CD8-positive, alpha-beta T cell (primary cell): ENCODE measurements at regions of chr12 and their contacts with region 1.

Region 1: DNA sequence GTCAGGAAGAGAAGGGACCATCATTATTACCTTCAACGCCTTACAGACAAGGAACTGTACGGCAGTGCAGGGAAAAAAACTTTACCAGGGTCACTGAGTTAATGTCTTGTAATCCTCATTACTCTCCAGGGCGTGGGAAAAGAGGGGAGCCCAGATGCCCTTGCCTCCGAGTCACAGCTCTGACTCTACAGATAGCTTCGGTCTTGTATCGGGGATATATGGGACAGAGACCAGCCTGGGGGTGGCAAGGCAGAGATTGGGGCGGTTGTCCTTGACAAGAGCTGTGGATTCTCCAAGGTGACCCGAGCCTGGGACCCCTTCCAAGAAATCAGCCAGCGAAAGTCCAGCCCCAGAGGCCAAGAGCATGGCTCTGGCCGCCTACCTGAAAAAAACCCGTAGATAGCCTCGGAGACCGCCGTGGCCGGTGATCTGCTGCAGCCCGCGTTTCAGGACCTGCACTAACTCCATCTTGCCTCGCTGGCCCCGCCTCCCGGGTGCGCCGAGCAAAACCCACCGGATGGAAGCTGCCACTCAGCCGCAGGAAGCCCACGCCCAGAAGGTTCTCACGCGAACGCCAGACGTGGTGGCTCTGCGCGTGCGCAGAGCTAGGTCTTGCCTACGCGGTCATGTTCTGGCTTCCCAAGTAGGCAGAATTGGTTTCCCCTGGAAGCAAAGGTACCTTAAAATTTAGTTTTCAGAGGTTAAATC is at the start of gene NDUFA12:
- DNase-seq: peak; percentile 87 to 98 (median 94)
- ATAC-seq: peak; percentile 99
- H3K4me3 ChIP-seq: peak within 1 kb of the TSS; percentile 74 to 97
- H3K4me3 Mint-ChIP-seq: peak within 1 kb of the TSS; percentile 93
- H3K27ac ChIP-seq: peak within 1 kb of the TSS; percentile 64 to 82
- H3K27ac Mint-ChIP-seq: peak within 1 kb of the TSS; percentile 94
- H3K4me1 ChIP-seq: peaks cover 46% of the 10 kb centered on the region
- H3K4me1 Mint-ChIP-seq: peaks cover 57% of the 10 kb centered on the region
- H3K27me3 ChIP-seq: no peaks in the 10 kb centered on the region
- H3K27me3 Mint-ChIP-seq: no peaks in the 10 kb centered on the region
- CTCF ChIP-seq: no peak
- total RNA-seq, gene NDUFA12: 37.4 to 42.4 TPM

Region 2: DNA sequence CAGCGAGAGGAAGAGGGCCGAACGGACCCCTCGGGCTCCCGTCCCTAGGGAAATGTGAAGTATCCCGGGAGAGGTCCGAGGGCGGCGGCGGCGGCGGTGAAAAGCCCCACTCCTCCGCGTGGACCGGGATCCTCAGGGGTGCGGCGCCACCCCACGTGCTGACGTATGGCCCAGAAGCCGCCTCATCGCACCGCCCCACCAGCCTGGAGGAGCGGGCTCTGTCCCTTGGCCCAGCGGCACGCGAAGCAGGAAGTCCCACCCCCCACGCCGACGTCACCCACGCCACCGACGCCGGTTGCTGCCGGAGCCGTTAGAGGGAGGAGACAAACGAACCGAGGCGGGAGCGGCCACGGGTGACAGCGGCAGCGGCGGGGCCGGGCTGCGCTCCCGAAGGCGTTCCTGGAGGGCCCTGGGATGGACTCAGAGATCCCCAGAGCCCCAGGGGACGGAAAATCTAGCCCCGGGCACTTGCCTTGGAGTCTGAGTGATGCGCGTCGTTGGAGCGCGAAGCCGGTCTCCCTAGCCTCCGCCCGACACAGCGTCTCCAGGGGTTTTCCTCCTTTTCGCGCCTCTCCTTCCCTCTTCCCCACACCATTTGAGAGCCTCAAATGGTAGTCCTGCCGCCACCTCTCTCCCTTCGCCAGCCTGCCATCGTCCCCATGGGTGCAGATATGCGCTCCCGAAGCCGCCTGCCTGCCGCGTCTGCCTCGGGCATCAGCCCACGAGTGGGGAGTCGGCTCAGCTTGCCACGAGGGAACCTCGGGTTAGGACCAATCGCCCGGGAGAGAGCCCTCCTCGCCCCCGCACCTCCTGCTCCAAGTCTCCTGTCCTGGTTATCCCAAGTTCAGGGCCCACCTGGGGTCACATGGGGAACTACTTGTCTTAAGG is 543.4 kb before region 1 on chr12 and contains the start of gene CEP83:
- CTCF ChIA-PET with region 1: no interaction called
- POLR2A ChIA-PET with region 1: no interaction called
- intact Hi-C with region 1: loop called (anchors 2 to 10 kb)
- DNase-seq: peak; percentile 90 to 98 (median 97)
- ATAC-seq: peak; percentile 96
- H3K4me3 ChIP-seq: peak within 1 kb of the TSS; percentile 94 to 96
- H3K4me3 Mint-ChIP-seq: peak within 1 kb of the TSS; percentile 96
- H3K27ac ChIP-seq: peak within 1 kb of the TSS; percentile 91 to 93
- H3K27ac Mint-ChIP-seq: peak within 1 kb of the TSS; percentile 94
- H3K4me1 ChIP-seq: peaks cover 6% of the 10 kb centered on the region
- H3K4me1 Mint-ChIP-seq: peaks cover 33% of the 10 kb centered on the region
- H3K27me3 ChIP-seq: peaks cover 0 to 2% of the 10 kb centered on the region in 2 experiments
- H3K27me3 Mint-ChIP-seq: peaks cover 5% of the 10 kb centered on the region
- CTCF ChIP-seq: no peak
- total RNA-seq, gene CEP83: 9.7 to 11.2 TPM

Region 3: DNA sequence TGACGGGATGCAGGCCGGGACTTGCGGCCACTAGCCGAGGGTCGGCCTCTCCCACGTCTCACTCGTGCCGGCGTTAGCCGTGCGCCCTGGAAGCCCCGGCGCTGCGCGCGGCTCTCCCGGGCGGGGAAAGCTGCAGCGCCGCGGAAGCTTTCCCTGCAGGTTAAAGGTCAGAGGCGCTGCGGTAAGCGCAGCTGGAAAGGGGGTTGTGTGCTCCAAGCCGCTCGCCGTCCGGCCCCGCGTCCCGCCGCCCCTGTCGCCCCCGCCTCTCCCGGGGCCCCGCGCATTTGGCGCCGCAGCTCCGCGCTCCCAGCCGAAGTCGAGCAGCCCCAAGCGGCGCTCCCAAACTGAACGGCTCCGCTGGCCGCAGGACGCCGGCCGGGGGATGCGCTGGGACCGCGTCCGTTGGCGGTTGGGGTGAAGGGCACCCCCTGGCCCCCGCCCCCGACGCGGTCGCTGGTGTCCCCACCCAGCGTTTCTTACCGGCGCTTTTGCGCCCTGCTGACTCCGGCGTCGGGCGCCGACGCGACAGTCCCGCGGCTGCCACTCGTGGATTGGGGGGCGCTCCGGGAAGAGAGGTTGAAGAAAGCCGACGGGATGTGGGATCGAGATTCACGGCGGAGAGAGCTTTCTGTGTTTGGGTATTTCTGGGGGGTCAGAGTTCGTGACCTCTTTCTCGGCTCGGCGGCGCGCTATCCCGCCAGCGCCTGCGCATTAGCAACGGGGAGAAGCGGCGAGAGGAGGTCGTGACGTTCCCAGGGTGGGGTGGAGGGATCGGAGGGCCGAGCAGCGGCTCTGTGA is 69.7 kb after region 1 on chr12 and contains the start of gene NR2C1:
- CTCF ChIA-PET with region 1: interaction called, 8 read pairs
- POLR2A ChIA-PET with region 1: interaction called, 6 read pairs
- intact Hi-C with region 1: loop called (anchors 1 to 2 kb)
- DNase-seq: peak; percentile 83 to 97 (median 91)
- ATAC-seq: peak; percentile 98
- H3K4me3 ChIP-seq: peak within 1 kb of the TSS; percentile 86 to 96
- H3K4me3 Mint-ChIP-seq: peak within 1 kb of the TSS; percentile 97
- H3K27ac ChIP-seq: peak within 1 kb of the TSS; percentile 71 to 74
- H3K27ac Mint-ChIP-seq: peak within 1 kb of the TSS; percentile 95
- H3K4me1 ChIP-seq: peaks cover 5% of the 10 kb centered on the region
- H3K4me1 Mint-ChIP-seq: peaks cover 26% of the 10 kb centered on the region
- H3K27me3 ChIP-seq: no peaks in the 10 kb centered on the region
- H3K27me3 Mint-ChIP-seq: no peaks in the 10 kb centered on the region
- CTCF ChIP-seq: no peak
- total RNA-seq, gene NR2C1: 40.7 to 49.2 TPM

Region 4: DNA sequence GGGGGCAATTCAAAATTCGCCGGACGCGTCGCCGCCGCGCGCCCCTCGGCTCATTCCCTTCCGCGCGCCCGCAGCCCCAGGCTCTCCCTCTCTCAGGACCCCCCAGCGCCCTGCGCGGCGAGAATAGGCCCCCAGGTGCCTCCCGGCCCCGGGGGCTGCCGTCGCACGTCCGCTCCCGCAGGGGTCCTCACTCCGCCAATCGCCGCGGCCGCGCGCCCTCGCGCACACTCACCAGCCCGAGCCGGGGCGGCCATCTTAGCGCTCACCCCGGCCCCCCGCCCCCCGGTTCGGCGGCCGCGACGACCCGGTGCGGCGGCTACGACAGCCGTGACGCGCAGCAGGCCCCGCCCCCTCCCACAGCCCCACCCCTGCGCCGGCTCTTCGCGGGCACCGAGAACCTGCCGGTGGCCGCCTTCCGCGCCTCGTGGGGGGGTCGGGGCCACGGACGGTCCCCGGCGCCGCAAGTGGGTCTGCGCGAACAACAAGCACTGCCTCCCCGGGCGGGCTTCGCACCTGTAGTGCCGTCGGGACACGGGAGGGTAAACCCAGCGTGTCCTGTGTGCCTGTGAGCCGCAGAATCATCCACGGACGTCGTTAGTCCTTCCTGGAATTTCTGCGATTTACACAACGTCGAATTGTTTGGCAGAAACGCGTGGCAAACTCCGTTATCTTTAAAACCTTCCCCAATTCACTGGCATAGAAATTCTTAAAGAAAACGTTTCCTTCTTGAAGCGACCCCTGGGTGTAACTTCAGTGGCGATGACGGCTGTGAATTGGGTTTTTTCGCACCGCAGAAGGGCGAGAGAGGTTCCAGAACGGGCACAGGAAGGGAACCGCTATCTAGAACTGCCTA is 545.4 kb after region 1 on chr12:
- CTCF ChIA-PET with region 1: no interaction called
- POLR2A ChIA-PET with region 1: no interaction called
- intact Hi-C with region 1: loop called in 1 of 2 experiments (anchors 5 kb)
- DNase-seq: peak; percentile 47 to 88 (median 71)
- ATAC-seq: peak; percentile 73
- H3K4me3 ChIP-seq: peak overlapping the region; percentile 65 to 81
- H3K4me3 Mint-ChIP-seq: peak overlapping the region; percentile 95
- H3K27ac ChIP-seq: peak overlapping the region; percentile 77 to 86
- H3K27ac Mint-ChIP-seq: peak overlapping the region; percentile 96
- H3K4me1 ChIP-seq: peaks cover 25% of the 10 kb centered on the region
- H3K4me1 Mint-ChIP-seq: peaks cover 57% of the 10 kb centered on the region
- H3K27me3 ChIP-seq: peaks cover 0 to 2% of the 10 kb centered on the region in 2 experiments
- H3K27me3 Mint-ChIP-seq: no peaks in the 10 kb centered on the region
- CTCF ChIP-seq: no peak

Region 5: GRCh38 chr12:96035278-96036236 is 1032.2 kb after region 1 on chr12 and contains the start of gene LTA4H:
- CTCF ChIA-PET with region 1: no interaction called
- POLR2A ChIA-PET with region 1: no interaction called
- intact Hi-C with region 1: loop called in 1 of 2 experiments (anchors 5 kb)
- DNase-seq: peak; percentile 90 to 99 (median 97)
- ATAC-seq: peak; percentile 92
- H3K4me3 ChIP-seq: peak within 1 kb of the TSS; percentile 65 to 92
- H3K4me3 Mint-ChIP-seq: no peak within 1 kb of the TSS
- H3K27ac ChIP-seq: peak within 1 kb of the TSS; percentile 68 to 78
- H3K27ac Mint-ChIP-seq: no peak within 1 kb of the TSS
- H3K4me1 ChIP-seq: peaks cover 14% of the 10 kb centered on the region
- H3K4me1 Mint-ChIP-seq: peaks cover 12% of the 10 kb centered on the region
- H3K27me3 ChIP-seq: no peaks in the 10 kb centered on the region
- H3K27me3 Mint-ChIP-seq: no peaks in the 10 kb centered on the region
- CTCF ChIP-seq: no peak
- total RNA-seq, gene LTA4H: 38.4 to 42.9 TPM